ENCODE measurements at regions of chr16 and their contacts with region 1.

Region 1: GRCh38 chr16:77584205-77584859 is 138.0 kb upstream of the NUDT7 start:
- DNase-seq: peak; percentile 43 to 66
- ATAC-seq: peak; percentile 69 to 82; a peak in 4 of 6 replicates
- H3K4me3 ChIP-seq: no peak overlapping the region
- H3K27ac ChIP-seq: peak overlapping the region in 1 of 2 experiments; percentile 47; a peak in 1 of 6 replicates
- H3K4me1 ChIP-seq: peaks cover 27% of the 10 kb centered on the region; the same call in 2 of the 3 replicates
- CTCF ChIP-seq: peak; percentile 98
- EP300 ChIP-seq: no peak
- POLR2A ChIP-seq: no peak
- RAD21 ChIP-seq: peak; percentile 97 to 99

Region 2: DNA sequence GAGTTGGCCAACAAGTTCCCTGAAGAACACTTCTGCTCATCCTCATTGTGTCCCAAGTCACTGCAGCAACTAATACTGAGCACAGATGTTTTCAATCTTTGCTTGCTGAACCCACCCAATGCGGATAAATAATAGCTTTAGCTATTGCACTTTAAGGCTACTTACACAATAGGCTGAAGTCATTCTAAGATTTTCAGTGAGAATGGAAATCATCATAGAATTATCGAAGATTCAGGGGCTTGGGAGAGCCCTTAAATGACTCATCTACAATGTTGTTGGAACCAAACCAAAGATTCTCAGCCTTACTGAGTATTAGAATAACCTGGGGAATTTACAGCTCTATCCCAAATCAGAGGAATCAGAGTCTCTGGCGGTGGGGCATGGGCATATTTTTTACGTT is 333.9 kb before region 1 on chr16:
- CTCF ChIA-PET with region 1: interaction called, 14 read pairs
- POLR2A ChIA-PET with region 1: no interaction called
- DNase-seq: no peak
- ATAC-seq: no peak
- H3K4me3 ChIP-seq: no peak overlapping the region
- H3K27ac ChIP-seq: no peak overlapping the region
- H3K4me1 ChIP-seq: no peaks in the 10 kb centered on the region
- CTCF ChIP-seq: no peak
- EP300 ChIP-seq: no peak
- POLR2A ChIP-seq: no peak
- RAD21 ChIP-seq: no peak

Region 3: GRCh38 chr16:77308163-77308561 is 276.2 kb before region 1 on chr16:
- CTCF ChIA-PET with region 1: interaction called, 10 read pairs
- POLR2A ChIA-PET with region 1: no interaction called
- DNase-seq: peak; percentile 31 to 73
- ATAC-seq: peak; percentile 84 to 90
- H3K4me3 ChIP-seq: no peak overlapping the region
- H3K27ac ChIP-seq: peak overlapping the region; percentile 41 to 65; a peak in 3 of 6 replicates
- H3K4me1 ChIP-seq: peaks cover 31% of the 10 kb centered on the region
- CTCF ChIP-seq: no peak
- EP300 ChIP-seq: no peak
- POLR2A ChIP-seq: no peak
- RAD21 ChIP-seq: 0 out of 5 replicates have a peak, but pooled peaks of 1 of the 2 experiments have one; percentile 28

Region 4: DNA sequence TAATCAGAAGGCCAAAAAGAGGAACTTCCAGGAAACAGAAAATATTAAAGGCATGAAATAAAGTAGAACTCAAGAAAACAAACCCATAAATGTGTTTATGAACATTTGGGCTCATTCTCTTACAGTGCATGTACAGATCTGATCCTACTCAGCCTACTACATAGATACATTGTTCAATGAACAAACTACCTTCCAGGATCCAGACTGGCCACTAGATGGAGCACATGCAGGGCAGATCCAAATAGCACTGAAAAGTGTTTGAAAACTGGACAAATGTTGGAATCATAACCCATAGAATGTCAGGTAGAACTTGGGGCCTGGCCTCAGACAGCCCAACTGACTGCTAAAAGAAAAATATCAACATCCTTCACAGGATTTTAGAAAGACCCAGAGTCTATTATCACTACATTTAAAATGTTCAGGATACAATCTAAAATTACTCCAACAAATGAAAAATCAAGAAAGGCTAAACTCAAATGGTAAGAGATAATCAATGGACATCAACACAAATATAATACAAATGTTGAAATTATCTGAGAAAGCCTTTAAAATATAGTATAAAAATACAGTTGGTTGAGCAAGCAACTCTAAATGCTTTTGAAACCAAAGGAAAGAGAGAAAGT is 15.6 kb after region 1 on chr16:
- CTCF ChIA-PET with region 1: interaction called, 24 read pairs
- POLR2A ChIA-PET with region 1: no interaction called
- DNase-seq: peak; percentile 54 to 56
- ATAC-seq: peak; percentile 66 to 84; a peak in 3 of 6 replicates
- H3K4me3 ChIP-seq: no peak overlapping the region
- H3K27ac ChIP-seq: no peak overlapping the region
- H3K4me1 ChIP-seq: no peaks in the 10 kb centered on the region
- CTCF ChIP-seq: peak; percentile 67
- EP300 ChIP-seq: no peak
- POLR2A ChIP-seq: no peak
- RAD21 ChIP-seq: peak; percentile 49 to 65; a peak in 4 of 5 replicates

Region 5: DNA sequence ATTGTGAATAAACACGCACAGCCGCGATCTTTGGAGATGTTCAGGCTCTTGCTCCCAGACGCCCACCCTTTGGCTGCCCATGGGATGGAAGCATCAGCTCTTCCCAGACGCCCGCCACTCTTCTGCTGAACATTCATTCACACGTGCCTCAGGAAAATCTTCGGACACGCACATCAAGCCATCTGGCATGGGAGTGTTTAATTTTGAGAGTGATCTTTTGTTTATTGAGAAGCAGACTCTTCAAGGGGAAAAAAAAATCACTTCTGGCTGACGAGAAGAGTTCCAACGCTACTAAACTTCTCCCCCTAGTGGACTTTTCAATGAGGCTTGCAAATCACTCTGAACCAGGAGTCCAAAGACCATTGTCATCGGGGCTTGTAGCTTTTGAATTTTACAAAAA is 76.0 kb after region 1 on chr16:
- CTCF ChIA-PET with region 1: interaction called, 84 read pairs
- POLR2A ChIA-PET with region 1: no interaction called
- DNase-seq: peak; percentile 33 to 36
- ATAC-seq: peak; percentile 81 to 83; a peak in 5 of 6 replicates
- H3K4me3 ChIP-seq: no peak overlapping the region
- H3K27ac ChIP-seq: no peak overlapping the region
- H3K4me1 ChIP-seq: no peaks in the 10 kb centered on the region
- CTCF ChIP-seq: peak; percentile 65
- EP300 ChIP-seq: no peak
- POLR2A ChIP-seq: no peak
- RAD21 ChIP-seq: peak; percentile 67 to 75

Region 6: GRCh38 chr16:77692610-77693009 is 108.3 kb after region 1 on chr16:
- CTCF ChIA-PET with region 1: no interaction called
- POLR2A ChIA-PET with region 1: no interaction called
- DNase-seq: no peak
- ATAC-seq: no peak
- H3K4me3 ChIP-seq: no peak overlapping the region
- H3K27ac ChIP-seq: no peak overlapping the region
- H3K4me1 ChIP-seq: no peaks in the 10 kb centered on the region
- CTCF ChIP-seq: no peak
- EP300 ChIP-seq: no peak
- POLR2A ChIP-seq: no peak
- RAD21 ChIP-seq: no peak

Region 7: GRCh38 chr16:77736879-77737278 is 152.5 kb after region 1 on chr16:
- CTCF ChIA-PET with region 1: no interaction called
- POLR2A ChIA-PET with region 1: no interaction called
- DNase-seq: no peak
- ATAC-seq: no peak
- H3K4me3 ChIP-seq: no peak overlapping the region
- H3K27ac ChIP-seq: no peak overlapping the region
- H3K4me1 ChIP-seq: no peaks in the 10 kb centered on the region
- CTCF ChIP-seq: no peak
- EP300 ChIP-seq: no peak
- POLR2A ChIP-seq: no peak
- RAD21 ChIP-seq: no peak

Measured in A549 (cell line).